Sigmoid colon (tissue), 7 donors: ENCODE measurements at regions of chr1 and their contacts with region 1.

Region 1: DNA sequence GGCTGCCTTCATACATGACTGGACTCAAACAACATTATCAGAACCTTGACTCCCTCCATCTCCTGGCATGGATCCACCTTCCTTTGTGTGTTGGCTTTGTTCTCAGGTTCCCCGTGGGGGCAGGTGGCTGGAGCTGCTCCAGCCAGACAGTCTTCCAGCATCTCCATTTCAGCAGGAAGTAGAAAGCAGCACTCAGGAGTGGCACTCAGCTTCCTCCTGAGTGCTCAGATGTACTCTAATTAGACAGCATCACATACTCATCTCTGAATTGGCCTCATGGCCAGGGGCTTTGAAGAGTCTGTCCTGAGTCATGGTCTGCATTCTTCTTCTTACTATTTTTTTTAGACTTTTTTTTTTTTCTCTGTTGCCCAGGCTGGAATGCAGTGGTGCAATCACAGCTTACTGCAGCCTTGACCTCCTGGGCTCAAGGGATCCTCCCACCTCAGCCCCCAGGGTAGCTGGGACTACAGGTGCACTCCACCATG is 27.9 kb downstream of the OVAAL start:
- DNase-seq: no peak
- H3K4me3 ChIP-seq: no peak overlapping the region
- H3K27ac ChIP-seq: no peak overlapping the region
- H3K4me1 ChIP-seq: no peaks in the 10 kb centered on the region
- H3K27me3 ChIP-seq: no peaks in the 10 kb centered on the region
- CTCF ChIP-seq: no peak
- EP300 ChIP-seq: no peak
- POLR2A ChIP-seq: no peak

Region 2: DNA sequence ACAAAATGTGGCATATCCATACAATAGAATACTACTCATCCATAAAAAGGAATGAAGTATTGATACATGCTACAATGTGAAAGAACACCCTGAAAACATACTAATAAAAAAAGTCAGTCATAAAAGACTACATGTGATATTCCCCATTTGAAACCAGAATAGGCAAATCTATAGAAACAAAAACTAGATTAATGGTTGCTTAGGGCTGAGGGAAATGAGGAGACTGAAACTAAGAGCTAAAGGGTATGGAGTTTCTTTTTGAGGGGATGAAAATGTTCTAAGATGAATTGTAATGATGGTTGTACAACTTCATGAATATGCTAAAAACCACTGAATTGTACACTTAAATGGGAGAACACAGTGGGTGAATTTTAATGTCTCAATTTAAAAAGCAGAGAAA is 135.2 kb before region 1 on chr1:
- intact Hi-C with region 1: no loop called
- DNase-seq: no peak
- H3K4me3 ChIP-seq: no peak overlapping the region
- H3K27ac ChIP-seq: no peak overlapping the region
- H3K4me1 ChIP-seq: no peaks in the 10 kb centered on the region
- H3K27me3 ChIP-seq: no peaks in the 10 kb centered on the region
- CTCF ChIP-seq: no peak
- EP300 ChIP-seq: no peak
- POLR2A ChIP-seq: no peak

Region 3: GRCh38 chr1:180598333-180598974 is 11.7 kb after region 1 on chr1:
- intact Hi-C with region 1: loop called (anchors 1 kb)
- DNase-seq: no peak
- H3K4me3 ChIP-seq: no peak overlapping the region
- H3K27ac ChIP-seq: no peak overlapping the region
- H3K4me1 ChIP-seq: no peaks in the 10 kb centered on the region
- H3K27me3 ChIP-seq: no peaks in the 10 kb centered on the region
- CTCF ChIP-seq: no peak
- EP300 ChIP-seq: no peak
- POLR2A ChIP-seq: no peak

Region 4: GRCh38 chr1:180617774-180618395 is 31.2 kb after region 1 on chr1:
- intact Hi-C with region 1: no loop called
- DNase-seq: no peak
- H3K4me3 ChIP-seq: no peak overlapping the region
- H3K27ac ChIP-seq: no peak overlapping the region
- H3K4me1 ChIP-seq: peaks cover 0 to 8% (median 0%) of the 10 kb centered on the region in 4 donors
- H3K27me3 ChIP-seq: no peaks in the 10 kb centered on the region
- CTCF ChIP-seq: no peak
- EP300 ChIP-seq: no peak
- POLR2A ChIP-seq: no peak